GM10248 (cell line): ENCODE measurements at regions of chr14 and their contacts with region 1.

Region 1: DNA sequence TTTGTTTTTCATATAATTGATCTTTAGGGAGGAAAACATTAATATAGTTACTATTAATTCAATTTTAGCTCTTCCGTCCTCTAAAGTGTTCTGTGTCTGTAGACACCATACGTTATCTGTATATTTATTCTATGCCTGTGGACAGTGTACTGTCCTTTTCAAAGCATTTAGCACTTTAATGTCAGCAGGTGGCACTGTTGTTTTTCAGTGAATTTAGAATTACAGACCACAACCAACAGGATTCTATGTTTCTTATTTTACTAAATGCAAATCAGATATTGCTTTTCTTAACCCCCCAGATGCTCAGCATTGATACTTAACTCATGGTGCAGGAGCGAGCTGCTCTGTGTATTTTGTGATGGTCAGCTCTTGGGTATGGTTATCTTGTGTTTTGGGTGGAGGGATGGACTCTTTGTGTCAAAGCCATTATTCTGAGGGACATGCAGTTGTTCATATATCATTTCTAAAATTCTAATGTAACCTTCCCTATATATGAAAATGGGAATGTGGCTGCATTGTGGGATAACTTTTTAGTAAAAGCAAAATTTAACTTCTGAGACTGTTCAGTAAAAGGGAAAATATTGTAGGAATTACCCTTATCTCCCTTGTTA is 65.2 kb downstream of the PAPOLA start:
- DNase-seq: peak; percentile 13
- CTCF ChIP-seq: peak; percentile 66

Region 2: DNA sequence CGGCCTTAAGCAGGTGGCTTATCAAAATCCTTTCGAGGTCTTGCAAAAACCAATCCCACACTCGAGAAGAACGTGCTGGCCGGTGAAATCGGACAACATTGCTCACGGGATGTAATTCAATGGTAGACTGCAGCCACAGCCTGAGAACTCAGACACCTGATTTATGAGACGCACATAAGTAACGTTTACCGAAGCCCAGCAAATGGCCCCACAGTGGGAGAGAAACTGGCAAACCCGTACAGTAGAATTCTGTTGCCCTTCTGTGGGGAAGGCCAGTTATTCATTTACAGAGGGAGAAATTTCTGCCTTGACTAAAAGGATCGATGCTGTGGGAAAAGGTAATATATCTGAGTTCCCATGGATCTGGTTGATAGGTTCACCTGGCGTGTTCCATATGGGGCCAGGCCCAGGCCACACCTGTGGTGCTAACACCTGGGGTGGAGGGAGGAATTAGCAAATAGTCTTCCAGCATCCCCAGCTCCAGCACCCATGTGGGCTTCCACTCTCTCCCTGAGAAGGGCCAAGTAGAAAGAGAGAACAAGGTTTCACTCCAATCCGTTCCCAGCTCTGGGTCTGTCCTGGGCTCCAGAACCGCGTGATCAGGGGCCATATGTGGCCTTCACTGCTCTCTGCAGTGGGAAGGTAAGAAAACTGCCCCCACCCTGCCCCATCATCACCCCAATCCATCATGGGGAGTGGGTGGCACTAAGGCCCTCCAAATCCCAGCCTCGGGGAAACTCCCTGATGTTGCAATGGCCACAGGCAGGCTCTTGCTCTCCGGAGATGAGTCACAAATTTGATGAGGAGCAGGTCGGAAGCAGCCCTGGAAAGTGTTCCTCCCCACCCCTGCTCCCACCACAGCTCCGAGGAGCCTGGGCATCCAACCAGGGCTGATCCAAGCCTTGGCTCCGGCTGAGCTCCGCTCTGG is 298.7 kb before region 1 on chr14:
- CTCF ChIA-PET with region 1: no interaction called
- POLR2A ChIA-PET with region 1: no interaction called
- DNase-seq: no peak
- CTCF ChIP-seq: no peak

Region 3: GRCh38 chr14:96554315-96554910 is 13.0 kb before region 1 on chr14:
- CTCF ChIA-PET with region 1: interaction called, 31 read pairs
- POLR2A ChIA-PET with region 1: no interaction called
- DNase-seq: no peak
- CTCF ChIP-seq: no peak

Region 4: GRCh38 chr14:96581902-96582301 is 14.5 kb after region 1 on chr14:
- CTCF ChIA-PET with region 1: interaction called, 48 read pairs
- POLR2A ChIA-PET with region 1: no interaction called
- DNase-seq: no peak
- CTCF ChIP-seq: no peak

Region 5: DNA sequence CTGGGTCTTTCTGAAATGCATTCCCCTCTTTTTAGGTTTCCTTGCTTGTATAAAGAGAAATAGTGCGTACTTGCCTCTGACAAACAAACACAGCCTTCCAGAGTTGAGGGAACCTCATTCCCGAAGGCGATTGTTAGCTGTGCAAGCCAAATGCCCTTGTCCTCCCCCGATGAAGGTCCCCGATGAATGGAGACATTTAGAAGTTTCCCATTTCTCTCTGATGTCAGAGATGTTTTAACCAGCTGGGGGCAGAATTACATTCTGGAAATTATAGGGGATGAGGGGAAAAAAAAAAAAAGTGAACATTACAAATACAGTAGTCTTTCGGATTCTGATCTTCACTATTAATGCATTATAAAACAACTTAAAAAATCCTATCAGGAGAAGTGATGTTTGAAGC is 596.6 kb after region 1 on chr14:
- CTCF ChIA-PET with region 1: no interaction called
- POLR2A ChIA-PET with region 1: no interaction called
- DNase-seq: no peak
- CTCF ChIP-seq: no peak